Right ventricle myocardium inferior (tissue), 1 donor: ENCODE measurements at regions of chr15 and their contacts with region 1.

Region 1: DNA sequence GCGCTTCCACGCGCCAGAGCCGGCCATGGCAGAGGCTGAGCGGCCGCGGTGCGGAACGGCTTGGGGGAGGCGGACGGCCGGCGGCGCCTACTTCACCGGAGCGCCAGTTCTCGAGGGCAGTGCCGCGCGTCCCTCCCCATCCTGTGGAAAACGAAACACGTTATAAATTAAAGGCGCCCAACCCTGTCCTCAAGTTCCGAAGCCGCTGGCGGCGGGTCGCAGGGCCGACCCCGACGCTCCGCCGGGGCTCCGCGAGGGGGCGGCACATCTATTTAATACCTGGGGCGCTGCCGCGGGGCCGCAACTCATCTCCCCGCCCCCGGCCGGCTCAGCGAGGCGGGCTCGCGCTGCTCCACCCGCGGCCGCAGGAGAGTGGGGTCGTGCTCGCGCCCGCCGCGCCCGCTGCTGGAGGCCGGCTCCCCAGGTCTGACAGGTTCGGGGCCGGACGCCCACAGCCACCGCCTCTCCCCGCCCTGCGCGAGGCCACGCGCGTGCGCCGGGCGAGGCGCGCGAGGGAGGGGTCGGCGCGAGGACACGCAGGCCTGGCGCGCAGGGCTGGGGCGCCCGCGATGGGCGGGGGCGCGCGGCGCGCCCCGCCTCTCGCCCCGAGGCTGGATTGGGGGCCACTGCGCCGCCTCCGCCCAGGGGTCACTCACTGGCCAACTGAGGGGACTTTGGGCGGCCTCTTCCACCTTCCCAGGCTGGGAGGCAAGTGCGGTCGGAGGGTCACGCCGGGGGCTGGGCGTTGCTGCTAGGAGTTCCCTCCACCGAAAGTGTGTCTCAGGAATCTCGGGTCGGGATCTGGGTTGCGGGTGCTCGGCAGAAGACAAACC is at the start of gene SLC30A4:
- DNase-seq: peak; percentile 85
- ATAC-seq: peak; percentile 98
- total RNA-seq, gene SLC30A4: 4.0 TPM

Region 2: DNA sequence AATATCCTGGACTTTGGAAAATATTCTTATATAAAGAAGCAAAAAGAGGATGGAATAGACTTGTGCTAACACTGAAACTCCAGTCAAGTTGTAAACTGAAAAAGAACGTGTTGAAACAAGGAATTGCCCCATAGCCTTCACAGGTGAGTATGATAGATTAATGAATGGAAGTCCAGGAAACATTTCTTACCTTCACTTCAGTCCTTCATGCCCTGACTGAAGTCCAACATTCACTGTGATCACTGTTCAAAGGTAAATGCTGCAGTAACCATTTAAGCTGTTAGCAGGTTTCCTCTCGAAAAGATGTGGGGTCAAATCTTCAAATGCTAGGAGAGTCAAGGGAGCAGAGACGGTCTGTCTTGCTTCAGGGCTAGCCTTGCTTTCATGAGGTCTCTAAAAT is 46.1 kb before region 1 on chr15:
- intact Hi-C with region 1: no loop called
- DNase-seq: no peak
- ATAC-seq: no peak

Region 3: GRCh38 chr15:45587095-45587860 is 64.7 kb after region 1 on chr15 and contains the start of gene BLOC1S6:
- intact Hi-C with region 1: loop called (anchors 1 kb)
- DNase-seq: peak; percentile 94
- ATAC-seq: peak; percentile 90
- total RNA-seq, gene BLOC1S6: 25.0 TPM

Region 4: DNA sequence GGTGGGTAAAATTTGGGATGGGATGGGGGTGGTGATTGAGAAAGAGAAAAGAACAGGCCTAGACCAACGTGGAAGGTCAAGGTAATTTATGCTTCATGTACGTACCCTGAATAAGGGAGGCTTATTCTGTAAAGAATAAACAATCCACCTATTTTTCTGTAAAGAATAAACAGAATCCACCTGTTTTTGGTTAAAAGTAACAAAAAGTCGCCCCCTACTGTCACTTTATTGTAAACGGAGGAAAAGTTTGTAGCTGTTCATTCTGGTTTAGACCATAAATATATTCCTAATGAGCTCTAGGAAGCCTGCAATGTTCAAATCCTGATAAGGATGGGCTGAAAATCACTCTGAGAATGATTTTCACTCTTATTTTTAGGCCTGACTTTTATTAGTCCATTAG is 88.8 kb after region 1 on chr15:
- intact Hi-C with region 1: loop called (anchors 5 kb)
- DNase-seq: no peak
- ATAC-seq: no peak